HCT116 (cell line): ENCODE measurements at regions of chr4 and their contacts with region 1.

Region 1: GRCh38 chr4:109729718-109730618 is at the start of gene PLA2G12A:
- DNase-seq: peak; percentile 87
- ATAC-seq: peak; percentile 92
- H3K4me3 ChIP-seq: peak within 1 kb of the TSS; percentile 75 to 77
- H3K27ac ChIP-seq: peak within 1 kb of the TSS; percentile 71
- H3K4me1 ChIP-seq: peaks cover 6 to 17% of the 10 kb centered on the region in 2 experiments
- H3K27me3 ChIP-seq: no peaks in the 10 kb centered on the region
- CTCF ChIP-seq: no peak
- POLR2A ChIP-seq: peak; percentile 59
- RAD21 ChIP-seq: no peak
- total RNA-seq, gene PLA2G12A: 37.9 TPM

Region 2: DNA sequence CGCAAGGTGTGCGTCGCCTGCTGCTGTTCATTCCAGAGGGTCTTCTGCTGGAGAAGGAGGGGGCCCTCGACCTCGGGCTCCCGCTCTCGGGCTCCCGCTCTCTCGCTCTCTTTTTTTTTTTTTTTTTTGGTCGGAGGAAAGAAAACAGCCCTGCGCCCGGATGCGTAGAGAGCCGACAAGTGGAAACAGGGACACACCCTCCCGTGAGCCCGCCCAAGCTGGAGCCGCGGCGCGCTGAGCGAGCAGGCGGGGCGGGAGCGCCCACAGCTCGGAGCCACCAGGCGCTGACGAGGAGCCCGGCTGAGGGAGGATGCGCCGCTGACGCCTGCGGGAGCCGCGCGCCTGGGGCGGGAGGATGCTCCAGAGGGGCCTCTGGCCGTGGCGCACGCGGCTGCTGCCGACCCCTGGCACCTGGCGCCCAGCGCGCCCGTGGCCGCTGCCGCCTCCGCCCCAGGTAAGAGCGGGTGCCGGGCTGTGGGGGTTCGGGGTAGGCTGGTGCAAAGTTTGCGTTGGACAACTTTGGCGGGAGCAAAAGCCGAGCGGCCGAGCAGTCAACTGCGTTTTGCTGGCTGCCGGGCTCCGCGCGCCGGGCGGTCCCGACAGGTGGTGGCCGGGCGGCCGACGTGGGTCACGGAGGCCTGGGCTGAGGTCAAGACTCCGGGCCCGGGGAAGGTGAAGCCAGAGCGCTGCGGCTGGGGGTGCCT is 169.8 kb before region 1 on chr4 and contains the start of gene MCUB:
- CTCF ChIA-PET with region 1: no interaction called
- POLR2A ChIA-PET with region 1: no interaction called
- RAD21 ChIA-PET with region 1: no interaction called
- intact Hi-C with region 1: loop called (anchors 5 kb)
- DNase-seq: peak; percentile 73
- ATAC-seq: peak; percentile 95
- H3K4me3 ChIP-seq: peak within 1 kb of the TSS; percentile 76 to 86
- H3K27ac ChIP-seq: peak within 1 kb of the TSS; percentile 66
- H3K4me1 ChIP-seq: peaks cover 6 to 16% of the 10 kb centered on the region in 2 experiments; a peak in 3 of 4 replicates
- H3K27me3 ChIP-seq: no peaks in the 10 kb centered on the region
- CTCF ChIP-seq: no peak
- POLR2A ChIP-seq: no peak
- RAD21 ChIP-seq: no peak
- total RNA-seq, gene MCUB: 18.6 TPM